Activated CD4-positive, alpha-beta memory T cell treated with anti-CD3 and anti-CD28 coated beads for 36 hours (primary cell): ENCODE measurements at regions of chr2 and their contacts with region 1.

Region 1: DNA sequence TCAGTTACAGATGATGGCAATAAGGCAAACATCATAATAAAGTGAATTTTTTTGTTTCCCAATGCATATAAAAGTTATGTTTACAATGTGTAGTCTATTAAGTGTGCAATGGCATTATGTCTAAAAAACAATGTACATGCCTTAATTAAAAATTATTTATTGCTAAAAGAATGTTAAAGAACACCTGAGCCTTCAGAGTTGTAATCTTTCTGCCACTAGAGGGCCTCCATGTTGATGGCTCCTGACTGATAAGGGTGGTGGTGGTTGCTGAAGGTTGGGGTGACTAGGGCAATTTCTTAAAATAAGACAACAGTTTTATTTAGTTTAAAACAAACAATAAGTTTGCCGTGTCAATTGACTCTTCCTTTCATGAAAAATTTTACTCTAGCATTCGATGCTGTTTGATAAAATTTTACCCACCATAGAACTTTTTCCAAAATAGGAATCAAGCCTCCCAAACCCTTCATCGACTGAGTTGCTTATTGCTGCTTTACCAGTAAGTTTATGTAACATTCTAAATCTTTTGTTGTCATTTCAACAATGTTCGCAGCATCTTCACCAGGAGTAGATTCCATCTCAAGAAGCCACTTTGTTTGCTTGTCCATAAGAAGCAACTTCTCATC is 32.3 kb downstream of the MAP3K2 start:
- DNase-seq: peak; percentile 27
- H3K4me3 Mint-ChIP-seq: no peak overlapping the region
- H3K27ac Mint-ChIP-seq: no peak overlapping the region
- H3K4me1 Mint-ChIP-seq: peaks cover 44% of the 10 kb centered on the region
- H3K27me3 Mint-ChIP-seq: no peaks in the 10 kb centered on the region

Region 2: GRCh38 chr2:127254386-127254981 is 101.0 kb before region 1 on chr2:
- CTCF ChIA-PET with region 1: no interaction called
- POLR2A ChIA-PET with region 1: no interaction called
- intact Hi-C with region 1: no loop called
- DNase-seq: no peak
- H3K4me3 Mint-ChIP-seq: no peak overlapping the region
- H3K27ac Mint-ChIP-seq: no peak overlapping the region
- H3K4me1 Mint-ChIP-seq: no peaks in the 10 kb centered on the region
- H3K27me3 Mint-ChIP-seq: no peaks in the 10 kb centered on the region

Region 3: GRCh38 chr2:127379712-127380355 is 24.3 kb after region 1 on chr2:
- CTCF ChIA-PET with region 1: interaction called, 5 read pairs
- POLR2A ChIA-PET with region 1: no interaction called
- intact Hi-C with region 1: loop called (anchors 2 kb)
- DNase-seq: no peak
- H3K4me3 Mint-ChIP-seq: no peak overlapping the region
- H3K27ac Mint-ChIP-seq: peak overlapping the region; percentile 9
- H3K4me1 Mint-ChIP-seq: peaks cover 62% of the 10 kb centered on the region
- H3K27me3 Mint-ChIP-seq: no peaks in the 10 kb centered on the region